ENCODE measurements at regions of chr7 and their contacts with region 1.

Region 1: DNA sequence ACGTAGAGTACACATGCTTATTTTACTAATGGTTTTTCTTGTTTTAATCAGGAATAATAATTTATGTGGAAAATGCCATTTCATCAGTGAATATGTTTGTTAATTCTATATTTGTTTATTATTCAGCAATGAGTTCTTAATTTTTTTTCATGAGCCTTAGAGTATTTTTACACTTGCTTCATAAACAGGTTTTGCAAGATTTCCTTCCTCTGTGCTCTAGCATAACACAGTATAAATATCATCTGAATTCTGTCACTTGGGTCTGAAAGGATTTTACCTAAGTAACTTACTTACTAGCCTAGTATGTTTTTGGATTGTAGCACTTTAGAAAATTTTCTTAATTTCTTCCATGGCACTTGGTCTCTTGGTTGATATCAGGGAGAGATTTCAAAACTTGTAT is 45.8 kb downstream of the GLCCI1 start:
- DNase-seq: no peak
- H3K4me3 ChIP-seq: no peak overlapping the region
- H3K27ac ChIP-seq: no peak overlapping the region
- H3K4me1 ChIP-seq: no peaks in the 10 kb centered on the region
- CTCF ChIP-seq: no peak

Region 2: GRCh38 chr7:7933915-7934526 is 80.4 kb before region 1 on chr7:
- CTCF ChIA-PET with region 1: no interaction called
- POLR2A ChIA-PET with region 1: no interaction called
- intact Hi-C with region 1: no loop called
- DNase-seq: no peak
- H3K4me3 ChIP-seq: no peak overlapping the region
- H3K27ac ChIP-seq: no peak overlapping the region
- H3K4me1 ChIP-seq: no peaks in the 10 kb centered on the region
- CTCF ChIP-seq: no peak

Region 3: GRCh38 chr7:8044761-8045430 is 30.5 kb after region 1 on chr7:
- CTCF ChIA-PET with region 1: no interaction called
- POLR2A ChIA-PET with region 1: no interaction called
- intact Hi-C with region 1: loop called (anchors 1 kb)
- DNase-seq: no peak
- H3K4me3 ChIP-seq: no peak overlapping the region
- H3K27ac ChIP-seq: no peak overlapping the region
- H3K4me1 ChIP-seq: no peaks in the 10 kb centered on the region
- CTCF ChIP-seq: no peak

Region 4: DNA sequence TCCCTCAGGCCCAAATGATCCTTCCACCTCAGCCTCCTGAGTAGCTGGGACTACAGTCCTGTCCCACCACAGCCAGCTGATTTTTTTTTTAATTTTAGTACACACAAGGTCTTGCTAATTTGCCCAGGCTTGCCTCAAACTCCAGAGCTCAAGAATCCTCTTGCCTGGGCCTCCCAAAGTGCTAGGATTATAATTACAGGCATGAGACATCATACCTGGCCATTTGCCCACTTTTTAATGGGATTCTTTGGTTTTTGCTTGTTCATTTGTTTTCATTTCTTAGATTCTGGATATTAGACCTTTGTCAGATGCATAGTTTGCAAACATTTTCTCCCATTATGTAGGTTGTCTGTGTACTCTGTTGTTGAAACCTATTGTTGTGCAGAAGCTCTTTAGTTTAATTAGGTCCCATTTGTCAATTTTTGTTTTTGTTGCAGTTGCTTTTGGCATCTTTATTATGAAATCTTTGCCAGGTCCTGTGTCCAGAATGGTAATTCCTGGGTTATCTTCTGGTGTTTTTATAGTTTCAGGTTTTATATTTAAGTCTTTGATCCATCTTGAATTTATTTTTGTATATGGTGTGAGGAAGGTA is 49.4 kb after region 1 on chr7:
- CTCF ChIA-PET with region 1: no interaction called
- POLR2A ChIA-PET with region 1: no interaction called
- intact Hi-C with region 1: no loop called
- DNase-seq: no peak
- H3K4me3 ChIP-seq: no peak overlapping the region
- H3K27ac ChIP-seq: no peak overlapping the region
- H3K4me1 ChIP-seq: no peaks in the 10 kb centered on the region
- CTCF ChIP-seq: no peak

Region 5: GRCh38 chr7:8343556-8343955 is 329.2 kb after region 1 on chr7:
- CTCF ChIA-PET with region 1: no interaction called
- POLR2A ChIA-PET with region 1: no interaction called
- intact Hi-C with region 1: no loop called
- DNase-seq: no peak
- H3K4me3 ChIP-seq: no peak overlapping the region
- H3K27ac ChIP-seq: no peak overlapping the region
- H3K4me1 ChIP-seq: no peaks in the 10 kb centered on the region
- CTCF ChIP-seq: no peak

Measured in OCI-LY7 (cell line).